ENCODE measurements at regions of chr13 and their contacts with region 1.

Region 1: DNA sequence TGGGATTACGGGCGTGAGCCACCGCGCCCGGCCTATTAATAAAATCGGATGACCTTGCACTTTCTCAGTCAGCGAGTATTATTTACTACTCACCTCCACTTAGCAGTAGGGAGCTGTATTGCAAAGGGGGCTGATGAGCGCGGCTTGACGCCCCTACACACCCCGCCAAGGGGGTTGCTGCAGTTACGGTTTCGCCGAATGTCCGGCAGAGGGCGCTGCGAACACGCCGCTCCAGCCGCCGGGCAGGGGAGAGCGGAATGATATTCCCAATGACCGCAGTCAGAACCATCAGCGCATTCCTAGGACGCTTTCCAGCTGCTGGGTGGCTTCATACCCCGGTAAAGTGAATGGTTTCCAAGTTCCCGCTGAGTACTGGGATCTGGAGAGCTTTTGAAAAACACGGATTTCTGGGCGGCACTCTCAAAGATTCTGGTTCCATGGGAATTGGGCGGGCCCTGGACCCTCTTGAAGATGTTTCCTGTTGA is 30.0 kb upstream of the TPT1 start:
- DNase-seq: peak; percentile 41 to 48
- ATAC-seq: peak; percentile 76 to 94; a peak in 5 of 6 replicates
- H3K4me3 ChIP-seq: no peak overlapping the region
- H3K27ac ChIP-seq: peak overlapping the region in 1 of 2 experiments; percentile 34; a peak in 1 of 6 replicates
- H3K4me1 ChIP-seq: peaks cover 12% of the 10 kb centered on the region
- CTCF ChIP-seq: peak; percentile 76
- EP300 ChIP-seq: no peak
- POLR2A ChIP-seq: no peak
- RAD21 ChIP-seq: peak; percentile 73 to 78

Region 2: DNA sequence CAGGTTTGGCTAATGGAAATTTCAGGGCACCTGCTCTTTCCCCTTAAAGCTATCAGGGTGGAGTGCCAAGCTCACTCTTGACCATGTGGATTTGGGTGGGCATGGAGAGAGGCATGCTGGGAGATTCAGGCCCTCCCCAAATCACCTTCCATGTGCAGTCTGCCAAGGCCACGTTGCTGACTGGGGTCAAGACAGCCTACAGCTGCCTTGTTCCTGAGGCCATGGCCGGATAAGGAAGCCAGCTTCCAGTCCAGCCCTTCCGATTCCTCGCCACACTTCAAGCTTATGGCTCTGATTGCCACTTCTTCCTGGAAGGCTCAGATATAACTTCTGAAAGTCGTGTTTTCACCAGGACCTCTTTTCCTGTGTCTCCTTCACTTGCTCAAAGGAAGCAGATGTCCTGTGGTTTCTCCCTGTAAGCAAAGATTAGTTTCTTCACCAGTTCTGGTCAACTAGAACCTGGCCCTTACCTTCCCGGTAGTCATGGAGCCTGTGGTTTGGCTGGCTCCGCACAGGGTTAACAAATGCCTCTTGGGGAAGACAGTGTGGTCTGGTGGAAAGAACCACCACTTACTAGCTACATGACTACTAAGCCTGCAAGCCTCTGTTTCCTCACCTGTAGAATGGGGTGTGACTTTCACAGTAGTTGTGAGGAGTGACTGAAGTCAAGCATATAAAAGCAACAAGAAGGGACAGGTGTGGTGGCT is 13.8 kb before region 1 on chr13:
- CTCF ChIA-PET with region 1: interaction called, 16 read pairs
- POLR2A ChIA-PET with region 1: no interaction called
- DNase-seq: no peak
- ATAC-seq: no peak
- H3K4me3 ChIP-seq: no peak overlapping the region
- H3K27ac ChIP-seq: no peak overlapping the region
- H3K4me1 ChIP-seq: peaks cover 11% of the 10 kb centered on the region; the same call in 2 of the 3 replicates
- CTCF ChIP-seq: no peak
- EP300 ChIP-seq: no peak
- POLR2A ChIP-seq: no peak
- RAD21 ChIP-seq: no peak

Region 3: DNA sequence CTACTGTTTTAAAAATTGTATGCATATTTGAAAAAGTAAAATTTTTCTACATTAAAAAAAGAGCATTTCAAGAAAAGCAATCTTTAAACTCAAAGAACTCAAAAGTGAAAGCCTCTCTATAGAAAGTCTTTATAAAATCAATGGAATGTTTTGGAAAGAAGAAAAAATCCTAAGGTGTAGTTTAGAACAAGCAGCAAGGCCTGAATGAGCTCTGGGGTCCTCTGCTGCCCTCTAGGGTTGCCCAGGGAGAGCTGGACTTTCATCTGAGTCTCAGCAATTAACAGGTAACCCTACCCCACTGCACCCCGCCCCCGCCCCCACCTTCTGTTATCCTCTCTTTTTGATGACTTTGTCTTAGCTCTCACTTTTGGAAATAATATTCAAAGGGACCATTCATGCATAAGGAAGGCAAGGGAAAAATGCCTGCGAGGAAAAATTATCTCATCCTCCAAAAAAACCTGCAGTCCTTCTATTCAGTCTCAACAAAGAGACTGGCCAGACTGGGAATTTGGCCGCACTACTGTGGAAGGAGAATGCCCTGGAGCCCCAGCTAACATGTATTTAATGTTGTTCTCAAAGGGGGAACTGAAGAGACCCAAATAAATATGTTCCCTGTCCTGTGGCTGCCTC is 23.1 kb after region 1 on chr13:
- CTCF ChIA-PET with region 1: interaction called, 59 read pairs
- POLR2A ChIA-PET with region 1: no interaction called
- DNase-seq: peak; percentile 58
- ATAC-seq: peak; percentile 79 to 89; a peak in 4 of 6 replicates
- H3K4me3 ChIP-seq: no peak overlapping the region
- H3K27ac ChIP-seq: no peak overlapping the region
- H3K4me1 ChIP-seq: no peaks in the 10 kb centered on the region
- CTCF ChIP-seq: peak; percentile 55
- EP300 ChIP-seq: no peak
- POLR2A ChIP-seq: no peak
- RAD21 ChIP-seq: peak; percentile 51 to 52; a peak in 4 of 5 replicates

Region 4: DNA sequence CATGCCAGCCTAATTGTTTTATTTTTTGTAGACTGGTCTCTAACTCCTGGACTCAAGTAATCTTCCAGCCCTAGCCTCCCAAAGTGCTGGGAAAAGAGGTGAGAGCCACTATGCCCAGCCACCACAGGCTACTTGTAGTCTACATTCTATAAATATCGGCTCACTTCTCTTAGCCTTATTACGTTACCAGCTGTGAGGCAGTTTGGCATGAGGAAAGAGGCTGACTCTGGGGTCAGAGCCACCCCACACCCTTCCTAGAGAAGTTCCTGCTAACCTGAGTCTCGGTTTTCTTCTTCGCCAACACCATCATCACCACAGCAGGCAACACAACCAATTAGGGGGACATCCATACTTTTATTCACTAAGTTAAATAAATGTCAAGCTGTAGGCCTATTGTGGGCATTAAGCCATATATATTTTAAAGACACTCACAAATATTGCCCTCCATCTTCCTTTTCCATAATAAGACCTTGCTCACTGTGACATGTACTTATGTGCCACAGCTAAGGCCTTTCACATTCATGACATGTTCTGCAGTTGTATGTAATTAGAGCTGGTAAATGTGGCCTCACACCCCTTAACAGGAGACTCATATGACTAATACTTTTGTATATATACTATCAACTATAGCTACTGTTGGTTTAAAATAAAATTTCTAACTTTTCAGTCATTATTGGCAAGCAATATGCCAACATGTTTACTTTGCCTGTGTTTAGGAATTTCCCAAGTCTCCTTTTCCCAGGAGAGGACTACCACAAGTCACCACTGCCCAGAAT is 41.5 kb after region 1 on chr13:
- CTCF ChIA-PET with region 1: interaction called, 11 read pairs
- POLR2A ChIA-PET with region 1: no interaction called
- DNase-seq: no peak
- ATAC-seq: no peak
- H3K4me3 ChIP-seq: no peak overlapping the region
- H3K27ac ChIP-seq: 0 out of 6 replicates have a peak overlapping the region, but pooled peaks of 1 of the 2 experiments have one; percentile 13
- H3K4me1 ChIP-seq: peaks cover 42% of the 10 kb centered on the region
- CTCF ChIP-seq: no peak
- EP300 ChIP-seq: no peak
- POLR2A ChIP-seq: no peak
- RAD21 ChIP-seq: no peak